T-cell (primary cell): ENCODE measurements at regions of chr3 and their contacts with region 1.

Region 1: GRCh38 chr3:69120879-69121464 is 1.4 kb downstream of the LMOD3 start:
- DNase-seq: peak; percentile 43 to 91 (median 70)
- ATAC-seq: peak; percentile 70 to 92 (median 86)
- H3K4me3 ChIP-seq: no peak overlapping the region
- H3K4me3 Mint-ChIP-seq: no peak overlapping the region
- H3K27ac ChIP-seq: no peak overlapping the region
- H3K27ac Mint-ChIP-seq: peak overlapping the region in 1 of 2 donors; percentile 6
- H3K4me1 ChIP-seq: no peaks in the 10 kb centered on the region
- H3K4me1 Mint-ChIP-seq: peaks cover 0 to 5% (median 5%) of the 10 kb centered on the region in 3 donors
- H3K27me3 ChIP-seq: peaks cover 0 to 4% of the 10 kb centered on the region in 2 experiments
- H3K27me3 Mint-ChIP-seq: peaks cover 0 to 1% of the 10 kb centered on the region in 2 donors

Region 2: GRCh38 chr3:68728343-68728742 is 392.6 kb before region 1 on chr3:
- CTCF ChIA-PET with region 1: no interaction called
- POLR2A ChIA-PET with region 1: no interaction called
- DNase-seq: no peak
- ATAC-seq: no peak
- H3K4me3 ChIP-seq: no peak overlapping the region
- H3K4me3 Mint-ChIP-seq: no peak overlapping the region
- H3K27ac ChIP-seq: no peak overlapping the region
- H3K27ac Mint-ChIP-seq: no peak overlapping the region
- H3K4me1 ChIP-seq: no peaks in the 10 kb centered on the region
- H3K4me1 Mint-ChIP-seq: no peaks in the 10 kb centered on the region
- H3K27me3 ChIP-seq: peaks cover 0 to 9% of the 10 kb centered on the region in 2 experiments
- H3K27me3 Mint-ChIP-seq: peaks cover 4 to 13% of the 10 kb centered on the region in 2 donors

Region 3: DNA sequence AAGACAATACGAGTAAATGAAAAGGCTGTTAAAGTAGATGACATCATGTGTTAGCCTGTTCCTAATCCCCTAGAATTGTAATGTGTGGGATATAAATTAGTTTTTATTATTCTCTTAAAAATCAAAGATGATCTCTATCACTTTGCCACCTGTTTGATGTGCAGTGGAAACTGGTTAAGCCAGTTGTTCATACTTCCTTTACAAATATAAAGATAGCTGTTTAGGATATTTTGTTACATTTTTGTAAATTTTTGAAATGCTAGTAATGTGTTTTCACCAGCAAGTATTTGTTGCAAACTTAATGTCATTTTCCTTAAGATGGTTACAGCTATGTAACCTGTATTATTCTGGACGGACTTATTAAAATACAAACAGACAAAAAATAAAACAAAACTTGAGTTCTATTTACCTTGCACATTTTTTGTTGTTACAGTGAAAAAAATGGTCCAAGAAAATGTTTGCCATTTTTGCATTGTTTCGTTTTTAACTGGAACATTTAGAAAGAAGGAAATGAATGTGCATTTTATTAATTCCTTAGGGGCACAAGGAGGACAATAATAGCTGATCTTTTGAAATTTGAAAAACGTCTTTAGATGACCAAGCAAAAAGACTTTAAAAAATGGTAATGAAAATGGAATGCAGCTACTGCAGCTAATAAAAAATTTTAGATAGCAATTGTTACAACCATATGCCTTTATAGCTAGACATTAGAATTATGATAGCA is 15.8 kb before region 1 on chr3:
- CTCF ChIA-PET with region 1: interaction called, 7 to 12 read pairs
- POLR2A ChIA-PET with region 1: interaction called in 1 of 2 experiments, 6 read pairs
- DNase-seq: no peak
- ATAC-seq: no peak
- H3K4me3 ChIP-seq: no peak overlapping the region
- H3K4me3 Mint-ChIP-seq: no peak overlapping the region
- H3K27ac ChIP-seq: no peak overlapping the region
- H3K27ac Mint-ChIP-seq: peak overlapping the region in 1 of 2 donors; percentile 36
- H3K4me1 ChIP-seq: peaks cover 4 to 8% of the 10 kb centered on the region in 2 experiments
- H3K4me1 Mint-ChIP-seq: peaks cover 45 to 51% (median 48%) of the 10 kb centered on the region in 3 donors
- H3K27me3 ChIP-seq: no peaks in the 10 kb centered on the region
- H3K27me3 Mint-ChIP-seq: no peaks in the 10 kb centered on the region

Region 4: DNA sequence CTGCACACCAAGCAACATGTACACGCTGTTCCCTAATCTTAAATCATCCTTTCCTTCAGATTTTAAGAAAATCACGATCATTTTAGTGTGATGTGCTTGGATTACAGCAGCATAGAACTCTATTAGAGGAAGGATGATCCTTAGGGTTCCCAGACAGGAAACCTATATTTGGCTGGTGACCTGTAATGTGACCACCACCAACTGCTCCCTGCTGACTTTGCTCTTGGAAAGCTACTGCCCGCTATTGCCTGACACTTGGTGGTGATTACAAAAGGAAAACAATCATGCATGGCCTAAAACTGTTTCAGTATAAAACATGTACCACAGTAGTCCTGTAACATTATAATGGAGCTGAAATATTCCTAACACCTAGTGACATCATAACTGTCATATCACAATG is 28.6 kb after region 1 on chr3:
- CTCF ChIA-PET with region 1: no interaction called
- POLR2A ChIA-PET with region 1: no interaction called
- DNase-seq: no peak
- ATAC-seq: no peak
- H3K4me3 ChIP-seq: no peak overlapping the region
- H3K4me3 Mint-ChIP-seq: no peak overlapping the region
- H3K27ac ChIP-seq: no peak overlapping the region
- H3K27ac Mint-ChIP-seq: no peak overlapping the region
- H3K4me1 ChIP-seq: no peaks in the 10 kb centered on the region
- H3K4me1 Mint-ChIP-seq: no peaks in the 10 kb centered on the region
- H3K27me3 ChIP-seq: no peaks in the 10 kb centered on the region
- H3K27me3 Mint-ChIP-seq: no peaks in the 10 kb centered on the region

Region 5: GRCh38 chr3:69306239-69307185 is 185.5 kb after region 1 on chr3:
- CTCF ChIA-PET with region 1: interaction called, 9 to 21 read pairs
- POLR2A ChIA-PET with region 1: no interaction called
- DNase-seq: peak; percentile 23 to 87 (median 54)
- ATAC-seq: peak; percentile 96 to 98 (median 98)
- H3K4me3 ChIP-seq: no peak overlapping the region
- H3K4me3 Mint-ChIP-seq: no peak overlapping the region
- H3K27ac ChIP-seq: no peak overlapping the region
- H3K27ac Mint-ChIP-seq: no peak overlapping the region
- H3K4me1 ChIP-seq: no peaks in the 10 kb centered on the region
- H3K4me1 Mint-ChIP-seq: peaks cover 6 to 8% (median 7%) of the 10 kb centered on the region in 3 donors
- H3K27me3 ChIP-seq: no peaks in the 10 kb centered on the region
- H3K27me3 Mint-ChIP-seq: no peaks in the 10 kb centered on the region